Activated CD4-positive, alpha-beta memory T cell treated with anti-CD3 and anti-CD28 coated beads, Interleukin-2, amount 10 ng/mL, durations not matched to agents 7 days and 5 days (primary cell): ENCODE measurements at regions of chr17 and their contacts with region 1.

Region 1: DNA sequence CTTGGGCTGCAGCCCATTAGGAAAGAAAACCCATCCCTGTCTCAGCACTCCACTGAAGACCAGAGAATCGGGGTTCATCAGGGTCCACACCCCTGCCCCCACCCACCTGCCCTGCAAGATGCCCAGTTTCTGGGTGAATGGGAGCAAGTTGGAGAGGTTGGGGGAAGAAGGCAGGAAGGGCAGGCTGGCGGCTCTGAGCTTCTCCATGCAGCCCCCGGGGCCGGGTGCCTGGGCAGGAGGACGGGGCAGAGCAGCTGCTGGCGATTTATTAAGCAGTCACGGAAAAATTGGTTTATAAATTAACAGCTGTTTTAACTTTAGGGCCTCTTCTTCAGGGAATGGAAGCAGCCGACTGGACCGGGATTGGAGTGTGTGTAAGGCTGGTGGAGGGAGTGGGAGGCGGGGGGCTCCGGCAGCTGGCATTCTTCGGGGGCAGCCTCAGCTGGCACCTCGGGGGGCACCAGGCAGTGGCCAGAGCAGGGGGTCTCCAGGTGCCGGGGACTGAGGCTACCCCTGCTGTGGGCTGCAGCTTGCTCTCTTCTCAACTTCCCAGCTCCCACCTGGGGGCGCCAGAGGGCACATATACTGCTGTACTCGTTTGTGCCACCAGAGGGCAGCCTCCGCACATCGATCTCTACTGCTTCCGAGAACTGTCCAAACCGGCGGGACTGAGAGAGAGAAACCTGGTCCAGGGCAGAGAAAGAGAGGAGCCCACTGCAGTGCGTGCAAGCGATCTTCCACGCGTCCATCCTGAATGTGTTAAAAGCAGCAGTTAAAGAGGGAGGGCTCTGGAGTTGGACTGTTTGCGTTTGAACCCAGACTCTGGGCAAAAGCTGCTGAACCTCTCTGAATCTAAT is 5.0 kb upstream of the PPP1R1B start:
- DNase-seq: peak; percentile 92
- H3K4me3 Mint-ChIP-seq: peak overlapping the region; percentile 72
- H3K27ac Mint-ChIP-seq: peak overlapping the region; percentile 89
- H3K4me1 Mint-ChIP-seq: peaks cover 27% of the 10 kb centered on the region
- H3K27me3 Mint-ChIP-seq: peaks cover 49% of the 10 kb centered on the region

Region 2: DNA sequence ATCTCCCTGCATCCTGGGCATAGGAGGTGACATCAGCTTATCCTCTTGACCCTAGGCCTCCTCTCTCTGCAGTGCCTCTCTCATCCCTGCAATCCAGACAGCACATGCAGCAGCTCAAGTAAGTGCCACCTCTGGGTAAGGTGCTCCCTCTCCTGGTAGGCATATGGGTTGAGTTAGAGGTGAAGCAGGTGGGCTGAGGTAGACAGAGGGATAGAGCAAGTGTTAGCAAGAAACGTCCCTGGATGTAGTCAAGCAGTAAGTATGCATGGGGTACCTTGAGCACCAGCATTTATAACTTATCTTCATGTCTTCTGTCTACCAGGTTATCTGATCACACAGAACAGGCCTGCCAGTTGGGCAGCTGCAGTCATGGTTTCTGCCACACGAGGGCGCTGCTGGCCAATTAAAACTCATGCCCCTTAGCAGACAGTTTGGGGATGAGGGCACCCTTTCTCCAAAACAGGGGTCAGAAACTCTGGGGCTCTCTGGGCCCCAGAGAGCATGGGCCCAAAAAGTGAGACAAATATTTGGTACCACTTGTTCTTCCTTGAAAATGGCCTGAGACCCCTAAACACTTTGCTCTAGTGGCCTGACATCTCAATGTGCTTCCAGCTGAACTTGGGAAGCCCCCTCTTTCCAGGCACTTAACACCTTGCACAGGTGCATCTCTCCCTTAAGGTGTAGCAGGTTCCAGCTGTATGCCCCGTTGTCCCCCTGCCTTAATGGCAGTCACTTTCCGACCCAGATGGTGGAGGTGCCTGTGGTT is 73.9 kb before region 1 on chr17:
- CTCF ChIA-PET with region 1: interaction called, 99 read pairs
- POLR2A ChIA-PET with region 1: interaction called, 3 read pairs
- DNase-seq: peak; percentile 79
- H3K4me3 Mint-ChIP-seq: no peak overlapping the region
- H3K27ac Mint-ChIP-seq: no peak overlapping the region
- H3K4me1 Mint-ChIP-seq: no peaks in the 10 kb centered on the region
- H3K27me3 Mint-ChIP-seq: no peaks in the 10 kb centered on the region

Region 3: DNA sequence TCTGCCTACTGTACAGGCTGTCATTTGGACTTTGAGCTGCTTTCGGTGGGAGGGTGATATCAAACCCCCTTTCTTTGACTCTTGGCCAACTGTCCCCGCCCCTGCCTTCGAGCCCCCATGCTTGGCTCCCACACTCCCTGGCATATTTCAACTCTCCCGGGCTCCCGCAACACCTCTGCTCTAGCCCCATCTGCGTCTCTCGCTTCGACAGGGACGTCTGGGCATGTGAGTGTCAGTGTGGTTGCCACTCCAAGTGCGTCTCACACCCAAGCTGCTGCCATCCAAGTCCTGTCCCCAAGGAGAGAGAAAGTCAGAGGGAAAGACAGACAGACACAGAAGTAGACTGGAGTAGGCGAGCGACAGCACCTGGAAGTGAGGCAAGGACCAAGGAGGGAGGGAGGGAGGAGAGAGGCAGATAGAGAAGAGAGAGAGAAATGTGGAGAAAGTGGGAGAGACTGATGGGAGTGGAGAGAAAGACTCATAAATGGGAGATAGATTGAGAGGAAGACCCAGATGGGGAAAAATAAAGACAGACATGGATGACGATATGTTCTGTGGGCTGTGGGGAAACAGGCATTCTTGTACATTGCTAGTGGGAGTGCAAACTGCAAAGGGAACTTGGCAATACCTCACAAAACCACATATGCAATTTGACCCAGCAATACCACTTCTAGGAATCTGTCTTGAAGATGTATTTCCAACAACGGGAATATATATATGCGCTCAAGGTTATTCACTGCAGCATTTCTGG is 27.0 kb after region 1 on chr17:
- CTCF ChIA-PET with region 1: interaction called, 27 read pairs
- POLR2A ChIA-PET with region 1: no interaction called
- DNase-seq: no peak
- H3K4me3 Mint-ChIP-seq: no peak overlapping the region
- H3K27ac Mint-ChIP-seq: no peak overlapping the region
- H3K4me1 Mint-ChIP-seq: peaks cover 14% of the 10 kb centered on the region
- H3K27me3 Mint-ChIP-seq: no peaks in the 10 kb centered on the region

Region 4: GRCh38 chr17:39668199-39668966 is 46.6 kb after region 1 on chr17 and contains the start of gene PNMT:
- CTCF ChIA-PET with region 1: interaction called, 10 read pairs
- POLR2A ChIA-PET with region 1: interaction called, 4 read pairs
- DNase-seq: peak; percentile 70
- H3K4me3 Mint-ChIP-seq: peak within 1 kb of the TSS; percentile 27
- H3K27ac Mint-ChIP-seq: no peak within 1 kb of the TSS
- H3K4me1 Mint-ChIP-seq: peaks cover 6% of the 10 kb centered on the region
- H3K27me3 Mint-ChIP-seq: peaks cover 34% of the 10 kb centered on the region
- total RNA-seq, gene PNMT: not detected

Region 5: DNA sequence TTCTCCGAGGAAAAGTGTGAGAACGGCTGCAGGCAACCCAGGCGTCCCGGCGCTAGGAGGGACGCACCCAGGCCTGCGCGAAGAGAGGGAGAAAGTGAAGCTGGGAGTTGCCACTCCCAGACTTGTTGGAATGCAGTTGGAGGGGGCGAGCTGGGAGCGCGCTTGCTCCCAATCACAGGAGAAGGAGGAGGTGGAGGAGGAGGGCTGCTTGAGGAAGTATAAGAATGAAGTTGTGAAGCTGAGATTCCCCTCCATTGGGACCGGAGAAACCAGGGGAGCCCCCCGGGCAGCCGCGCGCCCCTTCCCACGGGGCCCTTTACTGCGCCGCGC is 78.0 kb after region 1 on chr17 and contains the start of gene ERBB2:
- CTCF ChIA-PET with region 1: interaction called, 11 read pairs
- POLR2A ChIA-PET with region 1: no interaction called
- DNase-seq: no peak
- H3K4me3 Mint-ChIP-seq: no peak within 1 kb of the TSS
- H3K27ac Mint-ChIP-seq: no peak within 1 kb of the TSS
- H3K4me1 Mint-ChIP-seq: peaks cover 9% of the 10 kb centered on the region
- H3K27me3 Mint-ChIP-seq: peaks cover 44% of the 10 kb centered on the region
- total RNA-seq, gene ERBB2: 5.1 to 6.0 TPM

Region 6: GRCh38 chr17:39908789-39909352 is 287.1 kb after region 1 on chr17:
- CTCF ChIA-PET with region 1: no interaction called
- POLR2A ChIA-PET with region 1: no interaction called
- DNase-seq: no peak
- H3K4me3 Mint-ChIP-seq: no peak overlapping the region
- H3K27ac Mint-ChIP-seq: no peak overlapping the region
- H3K4me1 Mint-ChIP-seq: peaks cover 23% of the 10 kb centered on the region
- H3K27me3 Mint-ChIP-seq: no peaks in the 10 kb centered on the region